HEK293 (cell line): ENCODE measurements at regions of chr20 and their contacts with region 1.

Region 1: DNA sequence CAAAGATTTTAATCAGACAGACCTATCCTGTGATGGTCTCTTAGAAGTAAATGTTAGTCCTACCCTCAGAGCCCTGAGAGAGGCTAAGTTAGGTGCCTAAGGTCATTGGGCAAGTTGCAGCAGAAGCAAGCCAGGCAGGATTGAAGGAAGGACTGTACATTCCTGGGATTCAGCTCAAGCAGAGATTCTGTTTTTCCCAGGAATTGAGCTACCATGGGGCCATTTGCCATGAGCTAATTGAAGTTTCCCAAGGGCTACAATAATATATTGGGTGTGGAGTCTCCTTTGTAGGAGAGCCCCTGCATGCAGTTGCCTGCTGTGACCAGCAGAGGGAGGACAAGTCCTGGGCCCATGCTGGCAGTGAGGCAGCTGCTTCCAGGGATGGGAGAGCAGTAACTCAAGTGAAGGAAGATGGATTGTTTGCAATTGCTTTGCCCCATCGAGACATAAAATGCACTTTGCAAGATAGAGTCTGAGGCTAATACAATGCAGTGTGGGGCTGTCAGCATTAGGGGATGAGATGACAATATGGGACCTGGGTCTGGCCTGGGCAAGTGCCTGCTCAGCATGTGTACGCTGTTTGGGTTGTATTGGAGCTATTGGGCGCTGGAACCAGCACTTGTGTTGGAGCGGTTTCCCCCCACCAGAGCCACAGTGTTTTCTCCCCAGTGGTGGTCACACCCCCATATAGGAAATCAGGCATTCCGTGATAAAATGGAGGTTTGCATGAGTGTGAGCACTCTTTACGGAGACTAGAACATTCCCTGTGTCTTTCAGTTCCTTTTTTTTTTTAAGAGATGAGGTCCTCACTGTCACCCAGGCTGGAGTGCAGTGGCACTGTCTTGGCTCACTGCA is 27.9 kb downstream of the DNMT3B start:
- H3K4me3 ChIP-seq: no peak overlapping the region
- H3K27ac ChIP-seq: no peak overlapping the region
- H3K4me1 ChIP-seq: no peaks in the 10 kb centered on the region
- CTCF ChIP-seq: peak; percentile 77

Region 2: GRCh38 chr20:32767418-32768198 is 22.5 kb before region 1 on chr20:
- CTCF ChIA-PET with region 1: no interaction called
- POLR2A ChIA-PET with region 1: no interaction called
- H3K4me3 ChIP-seq: no peak overlapping the region
- H3K27ac ChIP-seq: no peak overlapping the region
- H3K4me1 ChIP-seq: no peaks in the 10 kb centered on the region; the same call in 1 of the 2 replicates
- CTCF ChIP-seq: no peak

Region 3: GRCh38 chr20:32842688-32843524 is 52.8 kb after region 1 on chr20:
- CTCF ChIA-PET with region 1: interaction called, 13 read pairs
- POLR2A ChIA-PET with region 1: no interaction called
- H3K4me3 ChIP-seq: no peak overlapping the region
- H3K27ac ChIP-seq: no peak overlapping the region
- H3K4me1 ChIP-seq: no peaks in the 10 kb centered on the region
- CTCF ChIP-seq: no peak

Region 4: DNA sequence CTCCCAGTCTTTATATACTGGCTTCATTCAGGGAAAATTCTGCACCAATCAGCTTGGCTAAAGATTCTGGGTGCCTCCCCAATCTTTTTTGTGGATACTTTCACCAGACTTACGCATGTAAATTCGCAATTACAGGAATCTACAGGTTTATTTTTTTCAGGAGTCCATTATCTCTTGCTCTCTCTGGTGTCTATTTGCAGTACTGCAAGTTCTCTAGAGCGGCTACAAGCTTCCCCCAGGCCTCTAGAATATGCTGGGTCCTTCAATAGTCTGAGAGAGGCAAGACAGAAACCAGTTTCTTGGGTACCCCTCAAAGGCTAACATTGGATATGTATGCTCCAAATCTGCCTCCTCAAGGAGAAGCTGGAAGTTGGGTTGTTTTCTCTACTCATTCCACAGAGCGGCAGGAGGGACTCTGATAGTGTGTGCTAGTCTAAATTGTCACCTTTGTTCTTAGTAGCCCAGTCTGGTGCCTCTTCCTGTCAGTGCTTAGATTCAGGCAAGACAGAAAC is 155.6 kb after region 1 on chr20:
- CTCF ChIA-PET with region 1: interaction called, 13 read pairs
- POLR2A ChIA-PET with region 1: no interaction called
- H3K4me3 ChIP-seq: no peak overlapping the region
- H3K27ac ChIP-seq: no peak overlapping the region
- H3K4me1 ChIP-seq: no peaks in the 10 kb centered on the region
- CTCF ChIP-seq: no peak

Region 5: GRCh38 chr20:33031531-33031930 is 241.4 kb after region 1 on chr20 and contains the start of gene BPIFB6:
- CTCF ChIA-PET with region 1: no interaction called
- POLR2A ChIA-PET with region 1: no interaction called
- H3K4me3 ChIP-seq: no peak within 1 kb of the TSS
- H3K27ac ChIP-seq: no peak within 1 kb of the TSS
- H3K4me1 ChIP-seq: no peaks in the 10 kb centered on the region
- CTCF ChIP-seq: no peak

Region 6: GRCh38 chr20:33217052-33217451 is 426.9 kb after region 1 on chr20 and contains the start of gene BPIFA3:
- CTCF ChIA-PET with region 1: no interaction called
- POLR2A ChIA-PET with region 1: no interaction called
- H3K4me3 ChIP-seq: no peak within 1 kb of the TSS
- H3K27ac ChIP-seq: no peak within 1 kb of the TSS
- H3K4me1 ChIP-seq: no peaks in the 10 kb centered on the region
- CTCF ChIP-seq: no peak